ENCODE measurements at regions of chr10 and their contacts with region 1.

Region 1: GRCh38 chr10:116272440-116273283 is at the start of gene GFRA1:
- DNase-seq: peak; percentile 74
- H3K4me3 ChIP-seq: peak within 1 kb of the TSS; percentile 53 to 66 (median 57)
- H3K27ac ChIP-seq: peak within 1 kb of the TSS; percentile 75 to 80 (median 76)
- H3K4me1 ChIP-seq: peaks cover 0 to 48% (median 38%) of the 10 kb centered on the region in 4 donors
- H3K27me3 ChIP-seq: peaks cover 19 to 69% (median 36%) of the 10 kb centered on the region in 3 donors
- CTCF ChIP-seq: peak in 1 of 4 experiments; percentile 17
- EP300 ChIP-seq: no peak
- POLR2A ChIP-seq: no peak
- total RNA-seq, gene GFRA1: 38.9 to 115 (median 69.1) TPM

Region 2: DNA sequence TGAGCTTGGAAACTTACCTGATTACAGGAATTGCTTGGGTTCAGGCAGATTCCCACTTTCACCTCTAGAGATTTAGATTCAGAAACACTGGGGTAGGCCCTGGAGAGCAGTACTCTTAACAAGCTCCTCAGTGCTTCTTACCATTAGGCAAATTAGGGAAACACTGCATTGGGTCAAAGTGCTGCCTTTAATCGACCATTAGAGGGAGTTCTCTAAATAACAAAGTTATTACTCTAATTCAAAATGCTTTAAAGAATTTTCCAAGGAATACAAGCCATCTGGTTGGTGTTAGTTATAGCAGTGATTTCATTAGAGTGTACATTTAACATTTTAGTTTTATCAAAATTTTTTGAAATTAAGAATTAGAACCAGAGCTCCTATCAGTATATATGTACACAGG is 324.2 kb before region 1 on chr10:
- intact Hi-C with region 1: loop called (anchors 5 kb)
- DNase-seq: no peak
- H3K4me3 ChIP-seq: no peak overlapping the region
- H3K27ac ChIP-seq: no peak overlapping the region
- H3K4me1 ChIP-seq: peaks cover 0 to 14% (median 0%) of the 10 kb centered on the region in 4 donors
- H3K27me3 ChIP-seq: no peaks in the 10 kb centered on the region
- CTCF ChIP-seq: peak in 1 of 4 experiments; percentile 43
- EP300 ChIP-seq: no peak
- POLR2A ChIP-seq: no peak

Region 3: GRCh38 chr10:116073001-116073400 is 199.7 kb before region 1 on chr10:
- intact Hi-C with region 1: loop called (anchors 5 kb)
- DNase-seq: no peak
- H3K4me3 ChIP-seq: no peak overlapping the region
- H3K27ac ChIP-seq: peak overlapping the region in 2 of 4 donors; percentile 18 to 74
- H3K4me1 ChIP-seq: peaks cover 0 to 60% (median 52%) of the 10 kb centered on the region in 4 donors
- H3K27me3 ChIP-seq: no peaks in the 10 kb centered on the region
- CTCF ChIP-seq: no peak
- EP300 ChIP-seq: no peak
- POLR2A ChIP-seq: no peak

Measured in sigmoid colon (tissue), 7 donors.